ENCODE measurements at regions of chr2 and their contacts with region 1.

Region 1: GRCh38 chr2:241508240-241509154 is at the start of gene STK25:
- DNase-seq: peak; percentile 98
- ATAC-seq: peak; percentile 93
- H3K4me3 Mint-ChIP-seq: peak within 1 kb of the TSS; percentile 84
- H3K27ac Mint-ChIP-seq: peak within 1 kb of the TSS; percentile 68
- H3K4me1 Mint-ChIP-seq: peaks cover 23% of the 10 kb centered on the region
- H3K27me3 Mint-ChIP-seq: no peaks in the 10 kb centered on the region
- CTCF ChIP-seq: no peak
- total RNA-seq, gene STK25: 123 and 151 TPM in 2 replicates

Region 2: GRCh38 chr2:240136013-240136670 is 1372.4 kb before region 1 on chr2 and contains the start of gene COPS9:
- CTCF ChIA-PET with region 1: no interaction called
- POLR2A ChIA-PET with region 1: no interaction called
- intact Hi-C with region 1: loop called (anchors 10 kb)
- DNase-seq: peak; percentile 87
- ATAC-seq: peak; percentile 94
- H3K4me3 Mint-ChIP-seq: peak within 1 kb of the TSS; percentile 88
- H3K27ac Mint-ChIP-seq: peak within 1 kb of the TSS; percentile 56
- H3K4me1 Mint-ChIP-seq: peaks cover 27% of the 10 kb centered on the region
- H3K27me3 Mint-ChIP-seq: peaks cover 5% of the 10 kb centered on the region
- CTCF ChIP-seq: no peak
- total RNA-seq, gene COPS9: 78.6 and 81.1 TPM in 2 replicates

Region 3: DNA sequence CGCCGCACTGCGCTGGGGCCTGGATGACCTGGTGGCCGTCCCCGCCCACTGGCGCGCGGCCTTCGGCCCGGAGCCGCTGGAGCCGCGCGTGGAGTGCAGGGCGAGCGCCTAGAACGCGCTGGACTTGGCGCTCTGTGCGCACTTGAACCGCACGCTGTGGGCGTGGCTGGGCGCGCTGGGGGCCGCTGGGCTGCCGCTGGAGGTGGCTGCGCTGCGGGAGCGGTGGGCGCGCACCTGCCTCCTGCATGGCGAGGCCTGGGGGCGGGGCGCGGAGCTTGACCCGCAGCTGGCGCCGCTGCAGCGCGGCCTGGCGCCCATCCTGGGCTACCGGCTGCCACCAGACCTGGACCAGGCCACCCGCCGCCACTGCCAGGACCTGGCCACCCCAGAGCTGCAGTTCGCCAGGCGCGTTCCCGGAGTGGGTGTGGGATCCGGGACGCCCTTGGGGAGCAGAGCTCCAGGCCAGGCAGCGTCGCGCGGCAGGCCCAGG is 835.8 kb before region 1 on chr2:
- CTCF ChIA-PET with region 1: no interaction called
- POLR2A ChIA-PET with region 1: no interaction called
- intact Hi-C with region 1: no loop called
- DNase-seq: no peak
- ATAC-seq: no peak
- H3K4me3 Mint-ChIP-seq: no peak overlapping the region
- H3K27ac Mint-ChIP-seq: no peak overlapping the region
- H3K4me1 Mint-ChIP-seq: no peaks in the 10 kb centered on the region
- H3K27me3 Mint-ChIP-seq: peaks cover 10% of the 10 kb centered on the region
- CTCF ChIP-seq: no peak

Region 4: GRCh38 chr2:240832205-240832727 is 676.2 kb before region 1 on chr2:
- CTCF ChIA-PET with region 1: no interaction called
- POLR2A ChIA-PET with region 1: no interaction called
- intact Hi-C with region 1: loop called (anchors 1 kb)
- DNase-seq: peak; percentile 89
- ATAC-seq: peak; percentile 94
- H3K4me3 Mint-ChIP-seq: peak overlapping the region; percentile 55
- H3K27ac Mint-ChIP-seq: no peak overlapping the region
- H3K4me1 Mint-ChIP-seq: peaks cover 5% of the 10 kb centered on the region
- H3K27me3 Mint-ChIP-seq: peaks cover 18% of the 10 kb centered on the region
- CTCF ChIP-seq: no peak

Region 5: GRCh38 chr2:241066893-241067341 is 441.6 kb before region 1 on chr2:
- CTCF ChIA-PET with region 1: no interaction called
- POLR2A ChIA-PET with region 1: no interaction called
- intact Hi-C with region 1: no loop called
- DNase-seq: no peak
- ATAC-seq: no peak
- H3K4me3 Mint-ChIP-seq: no peak overlapping the region
- H3K27ac Mint-ChIP-seq: no peak overlapping the region
- H3K4me1 Mint-ChIP-seq: peaks cover 2% of the 10 kb centered on the region
- H3K27me3 Mint-ChIP-seq: peaks cover 2% of the 10 kb centered on the region
- CTCF ChIP-seq: no peak

Region 6: DNA sequence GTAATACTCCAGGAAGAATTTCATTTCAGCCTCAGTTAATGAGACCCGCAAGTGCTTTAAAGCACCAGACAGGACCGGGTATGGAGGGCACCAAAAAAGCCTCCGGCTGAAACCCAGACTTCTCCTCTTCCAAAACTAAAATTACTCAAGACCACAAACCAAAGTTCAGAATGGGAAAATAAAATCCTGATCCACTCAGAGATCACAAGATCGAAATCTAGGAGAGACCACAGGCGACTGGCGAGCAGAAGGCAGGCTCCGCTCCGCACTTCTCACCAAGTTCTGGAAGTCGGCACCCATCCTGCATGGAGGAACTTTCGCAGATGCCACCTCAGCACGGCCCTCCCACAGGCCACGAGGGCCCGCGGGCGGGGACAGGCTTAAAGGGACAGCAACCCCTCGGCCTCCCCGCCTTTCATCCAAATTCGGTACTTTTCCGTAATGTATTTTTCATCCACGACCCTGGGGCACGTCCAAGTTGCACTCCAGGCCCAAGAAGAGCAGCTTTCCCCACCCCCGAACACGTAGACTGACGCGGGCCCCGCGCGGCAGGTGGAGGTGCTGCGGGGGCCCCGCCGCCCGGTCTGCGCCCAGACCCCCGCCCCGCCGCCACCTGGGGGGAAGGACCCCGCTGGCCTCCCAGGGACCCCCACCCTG is 236.7 kb before region 1 on chr2:
- CTCF ChIA-PET with region 1: no interaction called
- POLR2A ChIA-PET with region 1: no interaction called
- intact Hi-C with region 1: loop called (anchors 1 kb)
- DNase-seq: peak; percentile 52
- ATAC-seq: peak; percentile 70
- H3K4me3 Mint-ChIP-seq: peak overlapping the region; percentile 94
- H3K27ac Mint-ChIP-seq: peak overlapping the region; percentile 89
- H3K4me1 Mint-ChIP-seq: peaks cover 36% of the 10 kb centered on the region
- H3K27me3 Mint-ChIP-seq: no peaks in the 10 kb centered on the region
- CTCF ChIP-seq: no peak

Region 7: GRCh38 chr2:241609859-241610793 is 101.6 kb after region 1 on chr2:
- CTCF ChIA-PET with region 1: no interaction called
- POLR2A ChIA-PET with region 1: no interaction called
- intact Hi-C with region 1: loop called (anchors 2 kb)
- DNase-seq: peak; percentile 92
- ATAC-seq: peak; percentile 99
- H3K4me3 Mint-ChIP-seq: peak overlapping the region; percentile 66
- H3K27ac Mint-ChIP-seq: peak overlapping the region; percentile 53
- H3K4me1 Mint-ChIP-seq: peaks cover 15% of the 10 kb centered on the region
- H3K27me3 Mint-ChIP-seq: no peaks in the 10 kb centered on the region
- CTCF ChIP-seq: no peak

Region 8: GRCh38 chr2:241686649-241687425 is 178.3 kb after region 1 on chr2 and contains the start of gene DTYMK:
- CTCF ChIA-PET with region 1: no interaction called
- POLR2A ChIA-PET with region 1: no interaction called
- intact Hi-C with region 1: loop called (anchors 1 kb)
- DNase-seq: peak; percentile 99
- ATAC-seq: peak; percentile 95
- H3K4me3 Mint-ChIP-seq: peak within 1 kb of the TSS; percentile 80
- H3K27ac Mint-ChIP-seq: peak within 1 kb of the TSS; percentile 87
- H3K4me1 Mint-ChIP-seq: peaks cover 28% of the 10 kb centered on the region
- H3K27me3 Mint-ChIP-seq: no peaks in the 10 kb centered on the region
- CTCF ChIP-seq: no peak
- total RNA-seq, gene DTYMK: 29.2 and 34.7 TPM in 2 replicates

Region 9: GRCh38 chr2:241734467-241735208 is 226.1 kb after region 1 on chr2 and contains the start of gene D2HGDH:
- CTCF ChIA-PET with region 1: no interaction called
- POLR2A ChIA-PET with region 1: no interaction called
- intact Hi-C with region 1: loop called (anchors 1 kb)
- DNase-seq: peak; percentile 97
- ATAC-seq: peak; percentile 94
- H3K4me3 Mint-ChIP-seq: peak within 1 kb of the TSS; percentile 82
- H3K27ac Mint-ChIP-seq: peak within 1 kb of the TSS; percentile 75
- H3K4me1 Mint-ChIP-seq: peaks cover 57% of the 10 kb centered on the region
- H3K27me3 Mint-ChIP-seq: no peaks in the 10 kb centered on the region
- CTCF ChIP-seq: no peak
- total RNA-seq, gene D2HGDH: 37.7 and 55.4 TPM in 2 replicates

Measured in activated B cell treated with CpG ODN at 0.5 μM for 24 hours (primary cell).